ENCODE measurements at regions of chr13 and their contacts with region 1.

Region 1: GRCh38 chr13:52128714-52129700 is at the start of gene NEK5:
- DNase-seq: peak; percentile 78
- ATAC-seq: peak; percentile 95
- total RNA-seq, gene NEK5: 0.13 TPM

Region 2: GRCh38 chr13:51303063-51303552 is 825.9 kb before region 1 on chr13:
- intact Hi-C with region 1: no loop called
- DNase-seq: no peak
- ATAC-seq: no peak

Region 3: DNA sequence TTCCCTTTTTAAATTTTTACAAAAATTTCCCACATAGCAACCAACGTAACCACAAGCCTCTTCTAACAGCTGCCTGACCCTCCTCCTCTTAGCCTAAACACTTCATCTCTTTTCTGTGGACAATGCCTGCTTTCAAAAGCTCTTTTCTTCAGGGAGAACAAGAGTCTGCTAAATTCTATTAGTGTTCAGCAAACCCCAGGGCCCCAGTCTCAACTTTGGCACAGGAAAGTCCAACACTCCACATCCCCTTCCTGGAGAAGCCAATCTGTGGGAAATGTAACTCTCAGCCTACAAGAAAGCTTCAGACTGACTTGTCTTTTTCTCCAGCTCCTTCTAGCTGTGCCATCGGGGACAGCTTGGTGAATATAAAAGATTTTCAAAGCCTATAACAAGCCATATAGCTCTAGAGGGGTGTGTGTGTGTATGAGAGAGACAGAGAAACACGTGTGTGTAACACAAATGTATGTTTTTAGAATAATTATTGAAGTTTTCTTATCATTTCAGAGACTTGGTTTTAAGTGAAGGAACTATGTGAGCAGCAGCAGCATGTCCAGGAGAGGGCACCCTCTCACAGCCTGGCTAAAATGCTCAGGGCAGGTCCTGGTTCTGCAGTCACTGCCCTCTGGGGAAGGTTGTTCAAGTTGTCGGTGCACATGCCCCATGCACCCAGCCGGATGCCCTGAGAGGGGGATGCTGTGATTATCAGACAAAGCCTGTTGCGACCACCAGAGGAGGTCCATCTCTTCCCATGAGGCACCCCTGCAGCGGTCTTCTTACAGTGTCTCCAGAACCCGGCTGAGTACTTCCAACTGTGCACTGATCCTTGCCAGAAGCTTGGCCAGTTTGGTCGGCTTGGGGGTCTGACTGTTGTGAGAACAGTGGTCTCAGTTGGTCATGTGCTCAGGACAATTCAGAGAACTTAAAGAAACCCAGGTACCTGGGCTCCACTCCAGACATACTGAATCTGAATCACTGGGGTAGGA is 232.8 kb before region 1 on chr13:
- intact Hi-C with region 1: loop called (anchors 5 kb)
- DNase-seq: peak; percentile 62
- ATAC-seq: peak; percentile 92

Region 4: GRCh38 chr13:51995677-51996551 is 133.1 kb before region 1 on chr13:
- intact Hi-C with region 1: loop called (anchors 5 kb)
- DNase-seq: peak; percentile 58
- ATAC-seq: peak; percentile 85